HAP-1 (cell line): ENCODE measurements at regions of chr12 and their contacts with region 1.

Region 1: GRCh38 chr12:105713606-105714305 is 383.3 kb downstream of the C12orf75 start:
- DNase-seq: no peak
- H3K4me3 ChIP-seq: no peak overlapping the region
- H3K4me1 ChIP-seq: peaks cover 13% of the 10 kb centered on the region
- H3K27me3 ChIP-seq: no peaks in the 10 kb centered on the region

Region 2: GRCh38 chr12:105600911-105601545 is 112.7 kb before region 1 on chr12:
- in situ Hi-C with region 1: no loop called
- DNase-seq: no peak
- H3K4me3 ChIP-seq: no peak overlapping the region
- H3K4me1 ChIP-seq: peaks cover 4% of the 10 kb centered on the region; the same call in 1 of the 2 replicates
- H3K27me3 ChIP-seq: no peaks in the 10 kb centered on the region

Region 3: DNA sequence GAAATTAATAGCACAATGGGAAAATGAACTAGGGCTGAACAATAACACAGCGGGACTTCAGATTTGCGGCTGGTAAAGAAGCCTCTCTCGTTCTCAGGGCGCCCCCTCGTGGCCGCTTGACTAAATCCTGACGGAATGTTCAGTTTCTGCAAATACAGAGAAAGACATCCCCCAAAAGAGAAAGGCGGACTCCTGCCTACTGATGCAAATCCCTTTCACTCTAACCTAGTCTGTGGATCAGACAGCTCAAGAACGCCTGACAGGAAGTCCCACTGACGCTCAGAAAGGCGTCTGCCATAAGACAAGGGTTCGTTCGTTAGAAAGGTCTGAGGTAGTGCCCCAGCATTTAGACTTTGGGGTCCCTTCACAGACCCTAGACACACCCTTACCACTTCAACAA is 422.5 kb after region 1 on chr12:
- in situ Hi-C with region 1: loop called (anchors 10 kb)
- DNase-seq: peak; percentile 90 to 95
- H3K4me3 ChIP-seq: peak overlapping the region; percentile 70
- H3K4me1 ChIP-seq: peaks cover 37% of the 10 kb centered on the region
- H3K27me3 ChIP-seq: no peaks in the 10 kb centered on the region